ENCODE measurements at regions of chr16 and their contacts with region 1.

Region 1: DNA sequence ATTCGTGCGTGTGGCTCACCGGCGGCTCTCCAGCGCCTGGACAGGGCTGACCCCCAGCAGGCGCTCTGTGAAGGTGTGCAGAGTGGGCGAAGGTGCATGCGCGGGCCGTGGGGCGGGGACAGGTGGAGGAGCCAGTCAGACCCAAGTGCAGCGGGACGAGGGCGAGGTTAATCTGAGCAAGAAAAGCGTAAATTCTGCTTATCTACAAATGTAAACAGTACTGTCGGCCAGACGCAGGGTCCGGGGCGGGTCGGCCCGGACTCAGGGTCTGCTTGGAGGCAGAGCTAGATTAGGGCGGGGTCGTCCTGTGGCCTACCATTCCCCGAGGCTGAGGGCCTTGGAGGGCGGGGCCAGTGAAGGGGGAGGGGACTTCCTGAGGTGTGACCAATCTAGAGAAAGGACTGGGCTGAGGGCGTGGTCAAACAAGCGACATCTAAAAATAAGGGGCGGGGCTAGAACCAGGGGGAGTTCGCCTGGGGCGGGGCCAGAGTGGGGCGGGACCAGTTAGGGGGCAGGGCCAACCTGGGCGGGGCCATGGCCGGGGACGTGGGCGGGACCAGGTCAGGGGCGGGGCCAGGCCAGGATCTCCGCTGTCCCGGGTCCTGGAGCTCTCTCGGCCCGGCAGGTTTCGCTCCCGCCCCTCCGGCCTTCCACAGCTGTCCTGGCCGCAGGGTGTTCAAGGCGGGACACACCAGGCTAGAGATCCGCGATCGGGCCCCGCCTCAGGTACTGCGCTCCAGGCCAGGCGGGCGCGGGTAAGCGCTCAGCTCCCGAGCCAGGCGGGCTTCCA is at the start of gene SEC14L5:
- DNase-seq: peak; percentile 55
- ATAC-seq: peak; percentile 94
- H3K4me3 ChIP-seq: peak within 1 kb of the TSS; percentile 61; the same call in 1 of the 2 replicates
- H3K27ac ChIP-seq: no peak within 1 kb of the TSS
- H3K4me1 ChIP-seq: peaks cover 4% of the 10 kb centered on the region; the same call in 1 of the 2 replicates
- H3K27me3 ChIP-seq: no peaks in the 10 kb centered on the region; a peak in 2 of 4 replicates
- CTCF ChIP-seq: no peak
- EP300 ChIP-seq: no peak
- POLR2A ChIP-seq: no peak
- RAD21 ChIP-seq: no peak
- polyA plus RNA-seq, gene SEC14L5: not detected

Region 2: DNA sequence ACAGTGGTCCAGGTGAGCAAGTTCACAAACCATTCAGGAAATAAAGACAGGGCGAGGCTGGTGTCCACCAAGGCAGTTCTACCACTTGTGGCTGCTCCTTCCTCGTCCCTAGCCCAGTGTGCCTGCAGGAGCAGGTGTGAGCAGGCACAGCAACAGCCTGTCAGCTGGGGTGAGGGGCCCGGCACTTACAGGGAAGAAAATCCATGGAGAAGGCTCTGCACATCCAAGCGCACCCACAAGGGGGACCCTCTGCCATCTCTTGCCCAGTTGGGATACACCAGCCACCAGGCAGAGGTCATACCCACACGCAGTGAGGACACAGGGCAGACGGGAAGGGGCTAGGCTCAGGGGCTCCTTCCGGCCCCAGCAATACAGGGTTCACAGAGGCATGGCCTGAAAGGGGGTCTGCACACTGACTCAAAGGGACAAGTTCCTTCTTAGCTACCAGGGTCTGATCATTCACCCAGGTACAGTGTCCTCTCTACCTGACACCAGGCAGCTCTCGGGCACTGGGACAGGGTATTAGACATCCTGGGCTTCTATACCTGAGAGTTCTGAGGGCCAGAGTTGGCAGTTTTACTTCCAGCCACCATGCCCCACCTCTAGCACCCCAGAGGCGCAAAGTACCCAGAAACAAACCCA is 446.4 kb before region 1 on chr16:
- CTCF ChIA-PET with region 1: no interaction called
- POLR2A ChIA-PET with region 1: no interaction called
- RAD21 ChIA-PET with region 1: no interaction called
- SMC1A ChIA-PET with region 1: no interaction called
- in situ Hi-C with region 1: loop called (anchors 10 kb)
- intact Hi-C with region 1: loop called (anchors 10 kb)
- DNase-seq: no peak
- ATAC-seq: no peak
- H3K4me3 ChIP-seq: no peak overlapping the region
- H3K27ac ChIP-seq: no peak overlapping the region
- H3K4me1 ChIP-seq: peaks cover 24% of the 10 kb centered on the region
- H3K27me3 ChIP-seq: no peaks in the 10 kb centered on the region
- CTCF ChIP-seq: peak; percentile 21 to 37 (median 23); a peak in 3 of 6 replicates
- EP300 ChIP-seq: no peak
- POLR2A ChIP-seq: no peak
- RAD21 ChIP-seq: no peak

Region 3: DNA sequence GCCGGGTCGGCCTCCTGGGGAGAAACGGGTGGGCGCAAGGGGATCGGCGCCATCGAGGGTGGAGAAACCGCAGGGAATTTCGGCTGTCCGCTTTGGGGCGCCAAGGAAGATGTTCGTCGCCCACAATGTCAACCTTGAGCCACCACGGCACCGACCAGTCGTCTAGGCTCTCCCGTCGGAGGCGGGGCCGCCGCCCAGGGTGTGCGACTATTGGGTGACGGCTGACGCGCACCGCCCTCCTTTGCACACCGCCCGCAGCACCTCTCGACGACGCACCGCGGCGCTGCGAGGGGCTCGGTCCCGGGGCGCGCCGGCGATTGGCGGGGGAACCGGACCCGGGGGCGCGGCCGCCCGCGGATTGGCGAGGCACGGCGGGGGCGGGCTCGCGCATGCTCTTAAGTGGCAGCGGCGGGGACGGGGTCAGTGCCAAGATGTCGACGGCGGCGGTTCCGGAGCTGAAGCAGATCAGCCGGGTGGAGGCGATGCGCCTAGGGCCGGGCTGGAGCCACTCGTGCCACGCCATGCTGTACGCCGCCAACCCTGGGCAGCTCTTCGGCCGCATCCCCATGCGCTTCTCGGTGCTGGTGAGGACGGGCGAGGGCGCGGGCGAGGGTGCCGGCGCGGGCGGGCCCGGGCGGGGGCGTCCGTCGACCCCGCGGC is 264.5 kb before region 1 on chr16 and contains the start of gene NUDT16L1:
- CTCF ChIA-PET with region 1: no interaction called
- POLR2A ChIA-PET with region 1: no interaction called
- RAD21 ChIA-PET with region 1: no interaction called
- SMC1A ChIA-PET with region 1: no interaction called
- in situ Hi-C with region 1: no loop called
- intact Hi-C with region 1: loop called (anchors 5 kb)
- DNase-seq: peak; percentile 76
- ATAC-seq: peak; percentile 97
- H3K4me3 ChIP-seq: peak within 1 kb of the TSS; percentile 94
- H3K27ac ChIP-seq: peak within 1 kb of the TSS; percentile 74
- H3K4me1 ChIP-seq: peaks cover 12% of the 10 kb centered on the region
- H3K27me3 ChIP-seq: no peaks in the 10 kb centered on the region
- CTCF ChIP-seq: peak in 1 of 3 experiments; percentile 20; a peak in 1 of 6 replicates
- EP300 ChIP-seq: no peak
- POLR2A ChIP-seq: peak; percentile 98
- RAD21 ChIP-seq: no peak
- polyA plus RNA-seq, gene NUDT16L1: 1.4 to 6.4 TPM

Region 4: DNA sequence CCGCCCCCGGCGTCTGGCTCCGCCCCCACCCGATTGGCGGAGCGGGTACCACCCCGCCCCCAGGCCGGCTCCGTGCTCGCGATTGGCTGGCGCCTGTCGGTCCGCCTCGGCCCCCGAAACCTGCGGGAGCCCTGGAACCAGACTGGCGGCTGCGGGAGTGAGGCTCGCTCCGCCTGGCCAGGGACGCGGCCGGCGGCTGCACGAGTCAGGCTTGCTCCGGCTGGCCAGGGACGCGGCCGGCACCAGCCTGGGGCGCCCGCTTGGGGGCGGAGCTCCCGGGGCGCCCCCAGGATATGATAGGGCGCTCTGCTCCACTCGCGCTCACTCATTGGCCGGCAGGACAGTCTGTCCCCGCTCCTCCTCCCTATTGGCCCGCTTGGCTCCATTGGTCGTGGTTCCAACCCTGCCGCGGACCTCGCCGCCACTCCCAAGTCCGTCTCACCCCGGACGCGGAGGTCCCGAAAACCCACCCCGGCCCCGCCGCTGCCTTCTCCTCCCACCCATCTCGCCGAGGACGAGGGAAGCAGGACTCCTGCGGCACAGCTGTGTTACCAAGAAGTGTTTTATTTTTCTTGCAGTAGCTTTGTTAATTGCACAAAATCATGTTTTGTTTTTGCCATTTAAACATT is 155.1 kb before region 1 on chr16:
- CTCF ChIA-PET with region 1: interaction called, 4 read pairs
- POLR2A ChIA-PET with region 1: no interaction called
- RAD21 ChIA-PET with region 1: no interaction called
- SMC1A ChIA-PET with region 1: no interaction called
- in situ Hi-C with region 1: no loop called
- intact Hi-C with region 1: loop called (anchors 10 kb)
- DNase-seq: peak; percentile 47
- ATAC-seq: peak; percentile 97
- H3K4me3 ChIP-seq: peak overlapping the region; percentile 72
- H3K27ac ChIP-seq: peak overlapping the region; percentile 20; the same call in 1 of the 2 replicates
- H3K4me1 ChIP-seq: peaks cover 20% of the 10 kb centered on the region
- H3K27me3 ChIP-seq: no peaks in the 10 kb centered on the region
- CTCF ChIP-seq: no peak
- EP300 ChIP-seq: no peak
- POLR2A ChIP-seq: peak; percentile 74
- RAD21 ChIP-seq: no peak

Region 5: DNA sequence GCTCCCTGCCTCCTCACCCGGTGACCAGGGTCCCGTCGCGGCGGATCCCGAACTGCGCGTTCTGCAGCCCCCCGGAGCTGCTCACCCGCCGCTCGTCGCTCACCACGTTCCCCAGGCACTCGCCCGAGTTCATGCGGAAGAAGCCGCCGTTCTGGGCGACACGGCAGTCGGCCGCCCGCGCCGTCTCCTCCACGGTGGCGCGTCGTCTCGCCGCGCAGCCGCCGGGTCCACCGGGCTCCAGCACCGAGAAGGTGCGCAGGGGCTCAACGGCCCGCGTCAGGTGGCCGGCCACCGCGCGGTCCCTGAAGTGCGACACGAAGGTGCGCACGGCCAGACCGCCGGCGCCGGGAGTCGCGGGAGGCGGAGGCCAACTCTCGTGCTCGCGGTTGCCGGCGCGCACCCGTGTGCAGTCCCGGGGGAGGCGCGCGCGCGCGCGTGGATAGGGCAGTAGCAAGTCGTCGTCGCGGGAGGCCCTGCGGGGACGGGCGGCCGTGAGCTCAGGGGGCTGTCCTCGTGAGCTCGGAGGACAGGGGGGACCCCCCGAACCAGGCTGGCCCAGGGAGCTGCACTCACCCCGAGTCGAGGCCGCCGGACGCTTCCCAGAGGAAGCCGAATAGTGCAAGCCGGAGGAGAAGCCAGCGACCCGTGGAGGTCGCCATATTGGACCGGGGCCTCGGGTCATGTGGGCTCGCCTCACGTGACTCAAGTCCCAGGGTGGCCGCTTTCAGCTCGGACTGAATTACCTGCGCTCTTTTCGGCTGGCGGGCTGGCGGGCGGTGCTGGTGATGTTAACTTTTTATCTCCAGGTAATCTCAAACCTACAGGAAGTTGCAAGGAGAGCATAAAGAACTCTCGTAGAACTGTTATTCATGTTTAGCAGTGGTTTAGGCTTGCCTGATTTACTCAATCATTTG is 75.6 kb after region 1 on chr16 and contains the start of gene NAGPA:
- CTCF ChIA-PET with region 1: no interaction called
- POLR2A ChIA-PET with region 1: no interaction called
- RAD21 ChIA-PET with region 1: no interaction called
- SMC1A ChIA-PET with region 1: no interaction called
- in situ Hi-C with region 1: no loop called
- intact Hi-C with region 1: no loop called
- DNase-seq: no peak
- ATAC-seq: peak; percentile 98
- H3K4me3 ChIP-seq: peak within 1 kb of the TSS; percentile 84
- H3K27ac ChIP-seq: no peak within 1 kb of the TSS
- H3K4me1 ChIP-seq: peaks cover 12% of the 10 kb centered on the region
- H3K27me3 ChIP-seq: no peaks in the 10 kb centered on the region
- CTCF ChIP-seq: no peak
- EP300 ChIP-seq: no peak
- POLR2A ChIP-seq: peak; percentile 77
- RAD21 ChIP-seq: no peak
- polyA plus RNA-seq, gene NAGPA: 0.03 to 0.79 TPM